Activated CD8-positive, alpha-beta T cell treated with anti-CD3 and anti-CD28 coated beads for 36 hours (primary cell): ENCODE measurements at regions of chr18 and their contacts with region 1.

Region 1: GRCh38 chr18:2971741-2972552 is 41.0 kb downstream of the LPIN2 start:
- DNase-seq: peak; percentile 88
- ATAC-seq: peak; percentile 78
- H3K4me3 Mint-ChIP-seq: peak overlapping the region; percentile 81
- H3K27ac Mint-ChIP-seq: peak overlapping the region; percentile 99
- H3K4me1 Mint-ChIP-seq: peaks cover 91% of the 10 kb centered on the region
- H3K27me3 Mint-ChIP-seq: no peaks in the 10 kb centered on the region
- CTCF ChIP-seq: no peak

Region 2: DNA sequence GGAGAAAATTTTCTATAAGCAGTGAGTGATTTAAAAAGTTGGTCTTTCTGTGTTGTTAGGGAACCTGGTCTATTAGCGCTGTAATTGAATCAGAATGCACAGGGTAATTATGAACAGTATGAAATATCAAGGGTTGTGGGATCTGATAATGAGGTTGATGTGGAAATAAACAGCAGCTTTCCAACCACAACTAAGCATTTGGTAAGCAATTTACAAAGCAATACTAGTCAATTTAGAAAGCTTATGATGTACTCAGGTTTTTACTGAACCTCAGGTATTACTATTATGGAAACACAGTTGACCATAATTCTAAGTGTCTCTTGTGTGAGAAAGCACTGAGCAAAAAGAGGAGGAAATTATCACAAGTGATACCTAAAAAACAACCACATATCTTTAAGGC is 327.4 kb before region 1 on chr18:
- CTCF ChIA-PET with region 1: no interaction called
- POLR2A ChIA-PET with region 1: no interaction called
- intact Hi-C with region 1: no loop called
- DNase-seq: no peak
- ATAC-seq: peak; percentile 45
- H3K4me3 Mint-ChIP-seq: no peak overlapping the region
- H3K27ac Mint-ChIP-seq: no peak overlapping the region
- H3K4me1 Mint-ChIP-seq: peaks cover 23% of the 10 kb centered on the region
- H3K27me3 Mint-ChIP-seq: no peaks in the 10 kb centered on the region
- CTCF ChIP-seq: no peak

Region 3: GRCh38 chr18:2758309-2758708 is 213.6 kb before region 1 on chr18:
- CTCF ChIA-PET with region 1: no interaction called
- POLR2A ChIA-PET with region 1: no interaction called
- intact Hi-C with region 1: no loop called
- DNase-seq: no peak
- ATAC-seq: no peak
- H3K4me3 Mint-ChIP-seq: no peak overlapping the region
- H3K27ac Mint-ChIP-seq: peak overlapping the region; percentile 80
- H3K4me1 Mint-ChIP-seq: peaks cover 18% of the 10 kb centered on the region
- H3K27me3 Mint-ChIP-seq: no peaks in the 10 kb centered on the region
- CTCF ChIP-seq: no peak

Region 4: GRCh38 chr18:2948038-2948437 is 23.9 kb before region 1 on chr18:
- CTCF ChIA-PET with region 1: interaction called, 10 read pairs
- POLR2A ChIA-PET with region 1: interaction called, 3 read pairs
- intact Hi-C with region 1: no loop called
- DNase-seq: no peak
- ATAC-seq: peak; percentile 47
- H3K4me3 Mint-ChIP-seq: no peak overlapping the region
- H3K27ac Mint-ChIP-seq: no peak overlapping the region
- H3K4me1 Mint-ChIP-seq: peaks cover 47% of the 10 kb centered on the region
- H3K27me3 Mint-ChIP-seq: no peaks in the 10 kb centered on the region
- CTCF ChIP-seq: no peak